Upper lobe of right lung (tissue), 1 donor: ENCODE measurements at regions of chr5 and their contacts with region 1.

Region 1: GRCh38 chr5:33439905-33440481 is 772 bp upstream of the TARS1 start:
- DNase-seq: no peak
- ATAC-seq: no peak
- H3K4me3 ChIP-seq: peak overlapping the region; percentile 71
- H3K27ac ChIP-seq: peak overlapping the region; percentile 87
- H3K4me1 ChIP-seq: peaks cover 10% of the 10 kb centered on the region
- H3K27me3 ChIP-seq: no peaks in the 10 kb centered on the region
- CTCF ChIP-seq: no peak

Region 2: DNA sequence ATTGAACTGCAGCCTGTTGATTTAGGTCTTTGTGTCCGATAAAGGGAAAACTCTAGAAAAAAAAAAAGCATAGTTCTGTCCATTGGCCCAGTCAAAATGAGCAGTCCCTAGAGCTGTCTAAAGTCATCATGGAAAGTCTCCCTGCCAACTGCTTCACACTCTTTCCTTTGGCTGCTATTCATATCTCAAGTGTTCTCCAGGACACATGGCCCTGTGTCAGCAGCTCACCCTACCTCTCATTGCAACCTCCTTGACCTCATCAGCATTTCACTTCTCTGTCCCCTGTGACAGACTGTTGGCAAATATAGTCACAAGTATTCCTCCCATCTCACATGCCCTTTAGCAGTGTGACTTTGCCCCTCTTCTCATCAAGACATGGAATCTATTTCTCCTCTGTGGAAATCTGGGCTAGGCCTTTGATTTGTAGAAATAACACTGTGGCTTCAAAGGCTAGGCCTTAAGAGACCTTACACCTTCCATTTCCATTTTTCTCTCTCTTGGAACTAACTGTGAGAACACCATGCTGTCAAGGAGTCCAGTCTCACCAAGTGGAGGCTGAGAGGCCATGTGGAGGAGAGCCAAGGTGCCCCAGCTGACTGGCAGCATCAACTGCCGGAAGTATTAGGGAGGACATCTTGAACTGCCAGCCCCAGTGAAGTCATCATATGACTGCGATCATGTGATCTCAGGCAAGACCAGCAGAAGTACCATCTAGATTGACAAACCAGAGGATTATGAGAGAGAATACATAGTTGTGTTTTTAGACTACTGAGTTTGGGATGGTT is 148.6 kb before region 1 on chr5:
- intact Hi-C with region 1: no loop called
- DNase-seq: no peak
- ATAC-seq: peak; percentile 66
- H3K4me3 ChIP-seq: no peak overlapping the region
- H3K27ac ChIP-seq: no peak overlapping the region
- H3K4me1 ChIP-seq: no peaks in the 10 kb centered on the region
- H3K27me3 ChIP-seq: no peaks in the 10 kb centered on the region
- CTCF ChIP-seq: no peak

Region 3: GRCh38 chr5:33556330-33557328 is 116.6 kb after region 1 on chr5:
- intact Hi-C with region 1: no loop called
- DNase-seq: no peak
- ATAC-seq: no peak
- H3K4me3 ChIP-seq: no peak overlapping the region
- H3K27ac ChIP-seq: no peak overlapping the region
- H3K4me1 ChIP-seq: no peaks in the 10 kb centered on the region
- H3K27me3 ChIP-seq: no peaks in the 10 kb centered on the region
- CTCF ChIP-seq: no peak

Region 4: GRCh38 chr5:33614039-33614438 is 174.0 kb after region 1 on chr5:
- intact Hi-C with region 1: no loop called
- DNase-seq: no peak
- ATAC-seq: no peak
- H3K4me3 ChIP-seq: no peak overlapping the region
- H3K27ac ChIP-seq: no peak overlapping the region
- H3K4me1 ChIP-seq: no peaks in the 10 kb centered on the region
- H3K27me3 ChIP-seq: no peaks in the 10 kb centered on the region
- CTCF ChIP-seq: no peak

Region 5: GRCh38 chr5:33936004-33936380 is 496.0 kb after region 1 on chr5:
- intact Hi-C with region 1: loop called (anchors 5 kb)
- DNase-seq: peak; percentile 73
- ATAC-seq: peak; percentile 70
- H3K4me3 ChIP-seq: peak overlapping the region; percentile 28
- H3K27ac ChIP-seq: no peak overlapping the region
- H3K4me1 ChIP-seq: peaks cover 10% of the 10 kb centered on the region
- H3K27me3 ChIP-seq: peaks cover 55% of the 10 kb centered on the region
- CTCF ChIP-seq: peak; percentile 19